Vagina (tissue), 2 donors: ENCODE measurements at regions of chr4 and their contacts with region 1.

Region 1: DNA sequence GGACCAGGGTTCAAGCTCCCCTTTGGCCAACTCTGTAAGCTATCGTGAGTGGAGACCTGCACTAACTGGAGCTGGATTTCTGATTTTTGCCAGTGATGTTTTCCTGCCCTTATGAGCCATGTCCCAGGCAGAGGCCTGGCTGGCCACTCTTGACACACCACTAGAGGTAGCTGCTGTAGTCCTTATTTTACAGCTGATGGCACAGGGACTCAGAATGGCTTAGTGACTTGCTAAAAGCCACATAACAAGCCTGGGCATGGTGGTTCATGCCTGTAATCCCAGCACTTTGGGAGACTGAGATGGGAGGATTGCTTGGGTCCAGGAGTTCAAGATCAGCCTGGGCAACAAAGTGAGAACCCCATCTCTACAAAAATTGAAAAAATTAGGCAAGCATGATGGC is 33.4 kb downstream of the CYTL1 start:
- DNase-seq: no peak
- H3K4me3 ChIP-seq: no peak overlapping the region
- H3K27ac ChIP-seq: no peak overlapping the region
- H3K4me1 ChIP-seq: peaks cover 11% of the 10 kb centered on the region
- H3K27me3 ChIP-seq: no peaks in the 10 kb centered on the region
- CTCF ChIP-seq: no peak
- POLR2A ChIP-seq: no peak

Region 2: DNA sequence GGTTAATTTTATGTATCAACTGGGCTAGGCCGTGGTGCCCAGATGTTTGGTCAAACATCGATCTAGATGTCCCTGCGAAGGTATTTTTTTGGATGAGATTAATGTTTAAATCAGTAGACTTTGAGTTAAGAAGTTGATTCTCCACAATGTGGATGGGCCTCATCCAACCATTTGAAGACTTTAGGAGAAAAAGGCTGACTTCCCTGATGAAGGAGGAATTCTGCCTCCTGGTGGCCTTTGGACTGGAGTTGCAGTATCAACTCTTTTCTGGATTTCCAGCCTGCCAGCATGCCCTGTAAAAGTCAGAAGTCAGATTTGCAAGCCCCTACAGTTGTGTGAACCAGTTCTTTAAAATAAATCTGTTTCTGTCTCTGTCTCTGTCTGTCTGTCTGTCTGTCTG is 156.9 kb after region 1 on chr4:
- intact Hi-C with region 1: loop called (anchors 10 kb)
- DNase-seq: peak in 1 of 2 donors; percentile 37
- H3K4me3 ChIP-seq: no peak overlapping the region
- H3K27ac ChIP-seq: no peak overlapping the region
- H3K4me1 ChIP-seq: no peaks in the 10 kb centered on the region
- H3K27me3 ChIP-seq: no peaks in the 10 kb centered on the region
- CTCF ChIP-seq: peak in 2 of 3 experiments; percentile 23 to 50
- POLR2A ChIP-seq: no peak